ENCODE measurements at regions of chr15 and their contacts with region 1.

Region 1: GRCh38 chr15:32936283-32936918 is 218.6 kb downstream of the GREM1 start:
- DNase-seq: no peak
- ATAC-seq: no peak
- H3K4me3 Mint-ChIP-seq: no peak overlapping the region
- H3K27ac Mint-ChIP-seq: no peak overlapping the region
- H3K4me1 Mint-ChIP-seq: peaks cover 2% of the 10 kb centered on the region
- H3K27me3 Mint-ChIP-seq: peaks cover 22% of the 10 kb centered on the region
- CTCF ChIP-seq: no peak

Region 2: GRCh38 chr15:32657198-32657883 is 279.1 kb before region 1 on chr15:
- CTCF ChIA-PET with region 1: interaction called, 18 read pairs
- POLR2A ChIA-PET with region 1: no interaction called
- intact Hi-C with region 1: loop called (anchors 5 kb)
- DNase-seq: no peak
- ATAC-seq: no peak
- H3K4me3 Mint-ChIP-seq: no peak overlapping the region
- H3K27ac Mint-ChIP-seq: no peak overlapping the region
- H3K4me1 Mint-ChIP-seq: no peaks in the 10 kb centered on the region
- H3K27me3 Mint-ChIP-seq: no peaks in the 10 kb centered on the region
- CTCF ChIP-seq: no peak

Region 3: GRCh38 chr15:32849769-32850668 is 86.4 kb before region 1 on chr15:
- CTCF ChIA-PET with region 1: interaction called, 84 read pairs
- POLR2A ChIA-PET with region 1: no interaction called
- intact Hi-C with region 1: no loop called
- DNase-seq: no peak
- ATAC-seq: no peak
- H3K4me3 Mint-ChIP-seq: no peak overlapping the region
- H3K27ac Mint-ChIP-seq: no peak overlapping the region
- H3K4me1 Mint-ChIP-seq: no peaks in the 10 kb centered on the region
- H3K27me3 Mint-ChIP-seq: peaks cover 4% of the 10 kb centered on the region
- CTCF ChIP-seq: no peak

Region 4: GRCh38 chr15:32899126-32899596 is 37.2 kb before region 1 on chr15:
- CTCF ChIA-PET with region 1: interaction called, 8 read pairs
- POLR2A ChIA-PET with region 1: no interaction called
- intact Hi-C with region 1: loop called (anchors 5 kb)
- DNase-seq: peak; percentile 58
- ATAC-seq: peak; percentile 98
- H3K4me3 Mint-ChIP-seq: peak overlapping the region; percentile 44
- H3K27ac Mint-ChIP-seq: no peak overlapping the region
- H3K4me1 Mint-ChIP-seq: peaks cover 32% of the 10 kb centered on the region
- H3K27me3 Mint-ChIP-seq: peaks cover 3% of the 10 kb centered on the region
- CTCF ChIP-seq: no peak

Region 5: DNA sequence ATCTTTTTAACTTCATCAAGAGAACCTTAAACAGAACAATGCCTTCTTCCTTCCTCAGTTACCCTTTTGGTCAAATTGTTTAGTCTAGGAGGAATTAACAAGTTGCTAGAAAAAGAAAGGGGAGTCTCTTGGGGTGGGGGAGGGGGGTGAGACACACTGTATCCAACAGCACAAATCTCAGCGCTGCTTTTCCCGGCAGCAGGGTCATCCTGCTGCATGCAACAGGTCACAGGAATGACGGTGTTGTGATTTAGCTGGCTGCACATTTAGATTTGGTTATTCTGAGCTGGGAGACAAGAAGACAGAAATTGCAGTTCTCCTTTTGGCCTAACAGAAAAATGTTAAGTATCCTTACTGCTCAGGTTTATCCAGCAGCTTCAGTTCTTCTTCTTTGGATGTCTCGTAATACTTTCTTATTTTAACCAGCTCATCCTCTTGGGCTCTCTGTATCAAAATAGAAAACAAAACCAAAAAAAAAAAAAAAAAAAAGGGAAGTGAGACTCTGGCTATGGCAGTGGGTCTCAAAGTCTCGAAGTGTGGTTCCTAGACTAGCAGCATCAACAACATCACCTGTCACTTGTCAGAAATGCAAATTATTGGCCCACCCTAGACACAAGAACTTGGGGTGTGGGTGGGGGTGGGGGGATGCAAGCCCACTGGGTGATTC is 28.1 kb before region 1 on chr15:
- CTCF ChIA-PET with region 1: interaction called, 17 read pairs
- POLR2A ChIA-PET with region 1: no interaction called
- intact Hi-C with region 1: no loop called
- DNase-seq: peak; percentile 24
- ATAC-seq: peak; percentile 85
- H3K4me3 Mint-ChIP-seq: peak overlapping the region; percentile 66
- H3K27ac Mint-ChIP-seq: peak overlapping the region; percentile 79
- H3K4me1 Mint-ChIP-seq: peaks cover 66% of the 10 kb centered on the region
- H3K27me3 Mint-ChIP-seq: no peaks in the 10 kb centered on the region
- CTCF ChIP-seq: no peak

Region 6: GRCh38 chr15:33419701-33420100 is 483.3 kb after region 1 on chr15:
- CTCF ChIA-PET with region 1: no interaction called
- POLR2A ChIA-PET with region 1: no interaction called
- intact Hi-C with region 1: no loop called
- DNase-seq: no peak
- ATAC-seq: no peak
- H3K4me3 Mint-ChIP-seq: no peak overlapping the region
- H3K27ac Mint-ChIP-seq: no peak overlapping the region
- H3K4me1 Mint-ChIP-seq: no peaks in the 10 kb centered on the region
- H3K27me3 Mint-ChIP-seq: peaks cover 3% of the 10 kb centered on the region
- CTCF ChIP-seq: no peak